IMR-90 (cell line): ENCODE measurements at regions of chrX and their contacts with region 1.

Region 1: DNA sequence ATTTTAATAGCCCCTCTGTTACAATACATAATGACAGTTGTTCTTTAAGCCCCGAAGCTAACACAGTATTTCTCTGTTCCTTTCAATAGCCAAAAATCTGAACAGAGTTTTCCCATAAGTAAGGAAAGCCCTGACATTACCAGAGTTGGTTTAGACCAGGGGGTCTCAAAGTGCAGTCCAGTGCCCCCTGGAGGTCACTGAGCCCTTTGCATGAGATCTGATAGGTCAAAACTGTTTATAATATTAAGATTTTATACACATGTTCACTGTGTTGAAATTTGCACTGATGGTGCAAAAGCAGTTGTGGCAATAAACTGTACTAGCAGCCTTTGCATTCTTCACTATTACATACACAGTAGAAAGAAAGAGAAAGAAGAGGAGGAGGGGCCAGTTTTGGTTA is 177.1 kb downstream of the SPANXN3 start:
- DNase-seq: no peak
- ATAC-seq: no peak
- H3K4me3 ChIP-seq: no peak overlapping the region
- H3K27ac ChIP-seq: no peak overlapping the region
- H3K4me1 ChIP-seq: no peaks in the 10 kb centered on the region
- H3K27me3 ChIP-seq: no peaks in the 10 kb centered on the region
- CTCF ChIP-seq: no peak
- POLR2A ChIP-seq: no peak
- RAD21 ChIP-seq: no peak

Region 2: GRCh38 chrX:143401160-143401559 is 61.0 kb after region 1 on chrX:
- CTCF ChIA-PET with region 1: no interaction called
- POLR2A ChIA-PET with region 1: no interaction called
- dilution Hi-C with region 1: no loop called
- in situ Hi-C with region 1: no loop called
- intact Hi-C with region 1: loop called (anchors 2 kb)
- DNase-seq: no peak
- ATAC-seq: no peak
- H3K4me3 ChIP-seq: no peak overlapping the region
- H3K27ac ChIP-seq: no peak overlapping the region
- H3K4me1 ChIP-seq: no peaks in the 10 kb centered on the region
- H3K27me3 ChIP-seq: no peaks in the 10 kb centered on the region
- CTCF ChIP-seq: no peak
- POLR2A ChIP-seq: no peak
- RAD21 ChIP-seq: no peak

Region 3: DNA sequence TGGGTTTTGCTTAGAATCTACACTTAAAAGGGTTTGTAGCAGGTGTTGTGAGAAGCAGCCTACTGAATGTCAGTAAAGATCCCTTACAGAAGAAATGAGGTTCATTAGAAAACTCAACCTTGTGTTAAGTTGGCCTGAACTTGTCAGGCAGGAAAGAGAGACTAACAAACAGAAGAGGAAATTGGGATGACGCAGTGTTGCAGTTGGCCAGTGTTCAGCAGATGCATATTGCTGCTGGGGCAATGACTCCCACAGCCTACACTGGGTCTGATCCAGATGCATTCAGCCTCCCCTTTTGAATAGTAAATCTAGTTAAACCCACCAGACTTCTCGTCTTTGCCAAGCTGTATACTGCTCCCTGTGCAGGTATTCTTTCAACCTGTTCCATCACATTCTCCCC is 953.0 kb after region 1 on chrX:
- CTCF ChIA-PET with region 1: no interaction called
- POLR2A ChIA-PET with region 1: no interaction called
- dilution Hi-C with region 1: no loop called
- in situ Hi-C with region 1: no loop called
- intact Hi-C with region 1: no loop called
- DNase-seq: no peak
- ATAC-seq: no peak
- H3K4me3 ChIP-seq: no peak overlapping the region
- H3K27ac ChIP-seq: no peak overlapping the region
- H3K4me1 ChIP-seq: no peaks in the 10 kb centered on the region
- H3K27me3 ChIP-seq: no peaks in the 10 kb centered on the region
- CTCF ChIP-seq: no peak
- POLR2A ChIP-seq: no peak
- RAD21 ChIP-seq: no peak